Right ventricle myocardium inferior (tissue), 1 donor: ENCODE measurements at regions of chr20 and their contacts with region 1.

Region 1: DNA sequence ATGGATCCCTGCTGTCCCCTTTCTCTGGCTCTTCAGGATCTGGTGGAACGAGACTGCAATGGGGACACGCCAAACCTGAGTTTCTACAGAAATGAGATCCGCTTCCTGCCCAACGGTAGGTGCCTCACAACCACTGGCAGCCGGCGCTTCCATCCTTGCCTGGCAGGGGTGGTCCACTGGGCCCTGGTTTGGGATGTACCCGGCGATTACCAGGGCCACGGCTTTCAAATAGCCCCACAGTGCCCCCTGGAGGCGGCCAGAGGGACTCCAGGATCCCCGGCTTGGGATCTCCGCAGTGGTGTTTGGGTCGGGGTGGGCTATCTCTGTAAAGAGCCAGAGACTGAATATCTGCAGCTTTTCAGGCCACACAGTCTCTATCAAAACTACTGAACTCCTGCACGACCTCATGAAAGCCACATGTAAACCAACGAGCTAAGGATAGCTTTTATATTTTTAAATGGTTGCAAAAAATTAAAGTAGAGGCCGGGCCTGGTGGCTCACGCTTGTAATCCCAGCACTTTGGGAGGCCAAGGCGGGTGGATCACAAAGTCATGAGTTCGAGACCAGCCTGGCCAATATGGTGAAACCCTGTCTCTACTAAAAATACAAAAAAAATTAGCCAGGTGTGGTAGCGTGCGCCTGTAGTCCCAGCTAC is 3.7 kb downstream of the OGFR start:
- DNase-seq: peak; percentile 89
- ATAC-seq: peak; percentile 52

Region 2: GRCh38 chr20:62668441-62669027 is 139.8 kb before region 1 on chr20:
- intact Hi-C with region 1: loop called (anchors 1 kb)
- DNase-seq: no peak
- ATAC-seq: peak; percentile 60

Region 3: DNA sequence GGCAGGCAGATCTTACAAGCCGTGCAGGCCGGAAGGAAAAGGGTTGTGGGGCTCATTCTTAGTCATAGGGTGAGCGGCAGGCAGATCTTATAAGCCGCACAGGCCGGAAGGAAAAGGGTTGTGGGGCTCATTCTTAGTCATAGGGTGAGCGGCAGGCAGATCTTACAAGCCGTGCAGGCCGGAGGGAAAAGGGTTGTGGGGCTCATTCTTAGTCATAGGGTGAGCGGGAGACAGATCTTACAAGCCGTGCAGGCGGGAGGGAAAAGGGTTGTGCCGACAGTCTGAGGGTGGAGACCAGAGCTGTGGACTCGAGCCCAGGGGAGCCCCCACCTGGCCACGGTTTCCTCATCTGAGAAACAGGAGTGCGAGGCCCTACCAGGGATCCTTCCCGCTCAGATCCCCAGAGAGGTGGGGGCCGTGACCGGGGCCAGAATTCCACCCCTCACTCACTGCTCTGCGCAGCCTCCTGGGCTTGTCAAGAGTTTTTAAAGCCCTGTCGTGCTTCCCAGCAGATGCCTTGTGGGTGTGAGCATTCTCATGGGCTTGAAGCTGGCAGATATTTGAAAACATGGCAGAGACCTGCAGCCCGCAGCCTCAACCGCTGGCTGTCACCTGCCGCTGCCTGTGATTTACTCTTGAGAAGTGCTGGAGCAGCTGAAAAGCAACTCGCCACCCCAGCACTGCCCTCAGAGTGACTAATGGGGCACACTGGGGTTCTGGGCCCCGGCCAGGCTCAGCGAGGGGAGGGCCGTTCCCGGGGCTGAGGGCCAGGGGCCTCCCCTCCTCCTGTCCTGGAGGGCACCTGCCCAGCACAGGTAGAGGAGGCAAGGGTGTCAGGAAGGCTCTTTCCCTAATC is 67.8 kb before region 1 on chr20:
- intact Hi-C with region 1: no loop called
- DNase-seq: peak; percentile 66
- ATAC-seq: peak; percentile 20